Aorta (tissue), 5 donors: ENCODE measurements at regions of chr7 and their contacts with region 1.

Region 1: GRCh38 chr7:24401628-24402593 is 117.9 kb downstream of the NPY start:
- DNase-seq: no peak
- ATAC-seq: no peak
- H3K4me3 ChIP-seq: peak overlapping the region; percentile 14 to 59
- H3K27ac ChIP-seq: no peak overlapping the region
- H3K4me1 ChIP-seq: no peaks in the 10 kb centered on the region
- H3K27me3 ChIP-seq: no peaks in the 10 kb centered on the region

Region 2: DNA sequence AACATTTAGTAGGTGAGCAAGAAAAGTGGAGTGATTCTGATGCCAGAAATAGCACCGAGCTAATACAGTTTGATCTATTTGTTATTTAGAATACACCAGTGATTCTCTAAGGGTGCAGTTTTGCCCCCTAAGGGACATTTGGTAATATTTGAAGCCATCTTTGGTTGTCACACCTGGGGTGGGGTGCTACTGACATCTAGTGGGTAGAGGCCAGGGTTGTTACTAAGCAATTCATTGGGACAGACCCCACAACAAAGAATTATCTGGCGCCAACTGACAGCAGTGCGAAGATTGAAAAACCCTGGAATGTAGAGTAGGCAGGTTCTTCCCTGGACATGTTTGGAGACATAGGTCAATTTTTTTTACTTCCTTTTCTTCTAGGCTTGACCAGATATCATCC is 185.9 kb after region 1 on chr7:
- intact Hi-C with region 1: loop called in 1 of 2 experiments (anchors 5 kb)
- DNase-seq: no peak
- ATAC-seq: no peak
- H3K4me3 ChIP-seq: no peak overlapping the region
- H3K27ac ChIP-seq: no peak overlapping the region
- H3K4me1 ChIP-seq: peaks cover 0 to 2% of the 10 kb centered on the region in 2 donors
- H3K27me3 ChIP-seq: no peaks in the 10 kb centered on the region